GM12878 (cell line): ENCODE measurements at regions of chr17 and their contacts with region 1.

Region 1: GRCh38 chr17:74961657-74962490 is 10.7 kb downstream of the HID1 start:
- DNase-seq: no peak
- ATAC-seq: peak; percentile 86
- H3K4me3 ChIP-seq: no peak overlapping the region
- H3K27ac ChIP-seq: no peak overlapping the region
- H3K4me1 ChIP-seq: no peaks in the 10 kb centered on the region; the same call in 1 of the 2 replicates
- H3K27me3 ChIP-seq: no peaks in the 10 kb centered on the region
- CTCF ChIP-seq: peak; percentile 62 to 83 (median 72)
- EP300 ChIP-seq: no peak
- POLR2A ChIP-seq: no peak
- RAD21 ChIP-seq: peak; percentile 75

Region 2: GRCh38 chr17:74917430-74917829 is 44.4 kb before region 1 on chr17:
- CTCF ChIA-PET with region 1: interaction called, 274 read pairs
- POLR2A ChIA-PET with region 1: no interaction called
- RAD21 ChIA-PET with region 1: interaction called, 73 read pairs
- SMC1A ChIA-PET with region 1: interaction called, 73 read pairs
- in situ Hi-C with region 1: loop called (anchors 5 kb)
- intact Hi-C with region 1: no loop called
- DNase-seq: no peak
- ATAC-seq: no peak
- H3K4me3 ChIP-seq: no peak overlapping the region
- H3K27ac ChIP-seq: no peak overlapping the region
- H3K4me1 ChIP-seq: no peaks in the 10 kb centered on the region
- H3K27me3 ChIP-seq: peaks cover 0 to 3% of the 10 kb centered on the region in 2 experiments; a peak in 2 of 4 replicates
- CTCF ChIP-seq: no peak
- EP300 ChIP-seq: no peak
- POLR2A ChIP-seq: no peak
- RAD21 ChIP-seq: no peak

Region 3: DNA sequence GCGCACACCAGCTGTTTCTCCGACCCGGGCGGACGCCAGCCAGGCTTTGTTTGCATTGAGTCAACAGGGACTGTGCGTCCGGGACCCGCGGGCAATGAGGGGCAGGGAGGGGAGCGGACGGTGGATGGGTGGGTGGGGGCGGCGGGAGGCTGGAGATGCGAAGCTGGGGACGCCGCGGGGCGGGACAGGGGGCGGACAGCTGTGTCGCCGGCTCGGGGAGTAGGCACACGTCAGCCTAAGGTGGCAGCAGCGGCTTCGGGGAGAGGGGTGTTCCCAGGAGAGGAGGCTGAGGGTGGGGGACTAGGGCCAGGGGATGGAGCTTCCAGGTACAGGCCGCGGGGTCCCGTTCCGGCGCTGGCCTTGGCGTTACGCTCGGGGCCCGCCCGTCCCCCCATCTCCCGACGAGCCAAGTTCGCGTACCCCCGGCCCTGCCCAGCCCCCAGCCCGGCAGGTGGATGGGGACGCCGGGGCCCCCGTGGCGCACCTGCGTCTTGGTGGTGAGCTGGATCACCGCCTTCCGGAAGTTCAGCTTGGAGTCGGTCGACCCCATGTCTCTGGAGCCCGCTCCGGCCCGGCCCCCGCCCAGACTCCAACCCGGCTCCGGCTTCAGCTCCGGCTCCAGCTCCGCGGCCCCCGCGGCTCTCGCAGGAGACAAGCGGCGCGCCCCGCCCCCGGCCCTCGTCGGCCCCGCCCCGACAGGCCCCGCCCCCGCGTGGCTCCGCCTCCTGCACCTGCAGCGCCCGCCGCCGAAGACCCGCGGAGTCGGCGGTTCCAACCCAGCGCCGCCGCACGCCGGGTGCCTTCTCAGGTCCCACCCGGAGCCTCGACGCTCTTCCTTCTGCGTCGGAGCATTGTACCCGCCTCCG is 10.5 kb after region 1 on chr17 and contains the start of gene HID1:
- CTCF ChIA-PET with region 1: interaction called, 92 read pairs
- POLR2A ChIA-PET with region 1: no interaction called
- RAD21 ChIA-PET with region 1: interaction called, 7 read pairs
- SMC1A ChIA-PET with region 1: interaction called, 6 read pairs
- in situ Hi-C with region 1: no loop called
- intact Hi-C with region 1: no loop called
- DNase-seq: no peak
- ATAC-seq: peak; percentile 90
- H3K4me3 ChIP-seq: 0 out of 2 replicates have a peak within 1 kb of the TSS, but pooled peaks have one; percentile 55
- H3K27ac ChIP-seq: no peak within 1 kb of the TSS
- H3K4me1 ChIP-seq: no peaks in the 10 kb centered on the region
- H3K27me3 ChIP-seq: peaks cover 7 to 11% of the 10 kb centered on the region in 2 experiments; a peak in 3 of 4 replicates
- CTCF ChIP-seq: no peak
- EP300 ChIP-seq: no peak
- POLR2A ChIP-seq: no peak; the same call in 1 of the 2 replicates
- RAD21 ChIP-seq: no peak
- polyA plus RNA-seq, gene HID1: not detected

Region 4: DNA sequence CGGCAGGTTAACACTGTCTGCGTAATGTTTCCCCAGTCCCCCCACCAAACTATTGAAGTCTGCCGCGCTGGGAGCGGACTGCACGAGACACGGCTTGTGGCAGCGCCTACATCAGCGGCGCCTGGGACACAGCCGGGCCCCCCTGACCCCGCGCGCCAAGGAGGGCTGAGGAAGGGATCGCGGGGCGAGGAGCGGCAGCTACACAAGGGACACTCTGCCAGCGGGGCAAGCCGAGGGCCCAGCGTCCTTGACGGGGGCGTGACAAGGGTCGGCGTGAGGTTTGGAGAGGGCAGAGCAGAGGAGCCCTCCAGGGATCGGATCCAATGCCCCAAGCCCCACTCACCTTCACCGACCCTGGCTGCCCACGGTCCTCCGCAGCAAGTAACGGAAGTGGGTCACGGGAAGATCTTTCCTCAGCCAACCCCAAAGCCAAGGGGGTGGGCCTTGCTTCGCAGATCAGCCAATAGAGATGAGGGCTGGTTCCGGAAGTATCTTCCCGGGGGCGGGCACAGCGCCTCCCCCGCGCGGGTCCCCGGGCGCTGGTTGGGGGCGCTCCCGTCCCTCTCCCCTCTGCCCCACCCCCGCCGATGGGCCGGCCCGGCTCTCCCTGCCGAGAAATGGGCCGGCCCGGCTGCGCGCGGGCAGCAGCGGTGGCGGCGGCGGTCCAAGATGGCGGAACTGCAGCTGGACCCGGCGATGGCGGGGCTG is 84.9 kb after region 1 on chr17 and contains the starts of genes ATP5PD and KCTD2:
- CTCF ChIA-PET with region 1: interaction called, 16 read pairs
- POLR2A ChIA-PET with region 1: no interaction called
- RAD21 ChIA-PET with region 1: interaction called, 22 read pairs
- SMC1A ChIA-PET with region 1: interaction called, 11 read pairs
- in situ Hi-C with region 1: no loop called
- intact Hi-C with region 1: no loop called
- DNase-seq: peak; percentile 86
- ATAC-seq: peak; percentile 98
- H3K4me3 ChIP-seq: peak within 1 kb of the TSS; percentile 97
- H3K27ac ChIP-seq: peak within 1 kb of the TSS; percentile 71
- H3K4me1 ChIP-seq: peaks cover 3% of the 10 kb centered on the region
- H3K27me3 ChIP-seq: no peaks in the 10 kb centered on the region
- CTCF ChIP-seq: 0 out of 6 replicates have a peak, but pooled peaks of 1 of the 3 experiments have one; percentile 6
- EP300 ChIP-seq: no peak
- POLR2A ChIP-seq: peak; percentile 96
- RAD21 ChIP-seq: no peak
- polyA plus RNA-seq, gene ATP5PD: 710 to 772 TPM
- polyA plus RNA-seq, gene KCTD2: 1.5 to 2.2 TPM

Region 5: DNA sequence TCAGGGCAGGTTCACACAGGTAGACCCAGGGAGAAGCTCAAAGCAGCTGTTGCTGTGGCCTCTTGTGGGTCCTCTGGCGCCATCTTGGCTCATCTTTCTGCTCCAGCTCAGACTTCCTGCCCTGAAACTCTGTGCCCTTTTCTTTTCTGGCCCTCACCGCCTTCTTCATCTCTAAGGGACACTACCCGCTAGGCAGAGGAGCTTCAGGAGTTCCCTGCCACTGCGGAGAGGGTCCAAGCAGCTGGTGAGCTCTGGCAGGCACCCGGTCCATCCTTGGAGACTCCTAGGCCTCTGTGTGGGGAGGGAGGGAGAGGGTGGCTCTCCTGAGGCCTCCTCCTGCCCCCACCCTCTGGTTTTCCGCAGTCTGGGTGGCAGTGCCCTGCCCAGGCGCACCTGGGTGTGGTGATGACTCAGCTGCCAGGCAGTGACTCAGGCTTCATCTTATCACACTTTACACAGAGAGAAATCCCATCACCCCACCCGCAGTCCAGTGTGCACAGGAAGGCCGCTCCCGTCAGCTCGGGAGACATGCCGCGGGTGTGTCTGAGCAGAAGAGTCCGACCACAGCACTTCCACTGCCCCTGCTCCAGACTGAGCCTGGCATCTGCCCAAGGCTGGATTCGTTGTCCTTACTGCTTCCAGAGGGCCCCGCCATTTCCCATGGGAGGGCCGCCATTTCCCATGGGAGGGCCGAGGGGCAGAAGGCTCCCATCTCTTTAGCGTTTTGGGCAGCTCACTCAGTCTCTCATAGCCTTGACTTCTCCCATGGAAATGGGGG is 162.4 kb after region 1 on chr17:
- CTCF ChIA-PET with region 1: interaction called, 6 read pairs
- POLR2A ChIA-PET with region 1: no interaction called
- RAD21 ChIA-PET with region 1: interaction called, 8 read pairs
- SMC1A ChIA-PET with region 1: no interaction called
- in situ Hi-C with region 1: no loop called
- intact Hi-C with region 1: loop called (anchors 5 kb)
- DNase-seq: no peak
- ATAC-seq: no peak
- H3K4me3 ChIP-seq: no peak overlapping the region
- H3K27ac ChIP-seq: no peak overlapping the region
- H3K4me1 ChIP-seq: peaks cover 10% of the 10 kb centered on the region
- H3K27me3 ChIP-seq: no peaks in the 10 kb centered on the region
- CTCF ChIP-seq: no peak
- EP300 ChIP-seq: no peak
- POLR2A ChIP-seq: no peak
- RAD21 ChIP-seq: no peak

Region 6: DNA sequence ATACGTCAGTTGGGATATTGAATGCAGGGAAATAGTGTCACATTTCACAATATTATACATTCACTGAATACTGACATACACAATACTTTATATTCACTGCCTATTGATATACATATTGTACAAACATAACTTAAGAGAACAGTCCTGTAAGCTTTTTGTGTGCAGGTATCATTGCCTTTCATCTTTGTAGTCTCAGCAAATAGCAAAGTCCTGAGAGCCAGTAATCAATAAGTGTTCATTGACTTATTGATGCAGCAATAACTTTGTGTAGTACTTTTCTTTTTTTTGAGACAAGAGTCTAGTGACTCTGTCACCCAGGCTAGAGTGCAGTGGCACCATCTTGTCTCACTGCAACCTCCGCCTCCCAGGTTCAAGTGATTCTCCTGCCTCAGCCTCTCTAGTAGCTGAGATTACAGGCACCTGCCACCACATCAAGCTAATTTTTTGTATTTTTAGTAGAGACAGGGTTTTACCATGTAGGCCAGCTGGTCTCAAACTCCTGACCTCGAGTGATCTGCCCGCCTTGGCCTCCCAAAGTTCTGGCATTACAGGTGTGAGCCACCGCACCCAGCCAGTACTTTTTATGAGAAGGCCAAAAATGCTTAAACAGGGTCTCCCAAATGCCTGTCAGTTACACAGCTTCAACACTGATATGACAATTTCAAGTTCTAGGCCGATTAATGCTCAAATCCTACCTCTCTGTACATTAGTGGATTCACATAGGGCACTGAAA is 238.2 kb after region 1 on chr17:
- CTCF ChIA-PET with region 1: interaction called, 224 read pairs
- POLR2A ChIA-PET with region 1: interaction called, 7 read pairs
- RAD21 ChIA-PET with region 1: interaction called, 127 read pairs
- SMC1A ChIA-PET with region 1: interaction called, 74 read pairs
- in situ Hi-C with region 1: loop called (anchors 5 kb)
- intact Hi-C with region 1: loop called (anchors 1 kb)
- DNase-seq: no peak
- ATAC-seq: no peak
- H3K4me3 ChIP-seq: no peak overlapping the region
- H3K27ac ChIP-seq: no peak overlapping the region
- H3K4me1 ChIP-seq: no peaks in the 10 kb centered on the region; the same call in 1 of the 2 replicates
- H3K27me3 ChIP-seq: no peaks in the 10 kb centered on the region
- CTCF ChIP-seq: no peak
- EP300 ChIP-seq: no peak
- POLR2A ChIP-seq: no peak
- RAD21 ChIP-seq: no peak

Region 7: DNA sequence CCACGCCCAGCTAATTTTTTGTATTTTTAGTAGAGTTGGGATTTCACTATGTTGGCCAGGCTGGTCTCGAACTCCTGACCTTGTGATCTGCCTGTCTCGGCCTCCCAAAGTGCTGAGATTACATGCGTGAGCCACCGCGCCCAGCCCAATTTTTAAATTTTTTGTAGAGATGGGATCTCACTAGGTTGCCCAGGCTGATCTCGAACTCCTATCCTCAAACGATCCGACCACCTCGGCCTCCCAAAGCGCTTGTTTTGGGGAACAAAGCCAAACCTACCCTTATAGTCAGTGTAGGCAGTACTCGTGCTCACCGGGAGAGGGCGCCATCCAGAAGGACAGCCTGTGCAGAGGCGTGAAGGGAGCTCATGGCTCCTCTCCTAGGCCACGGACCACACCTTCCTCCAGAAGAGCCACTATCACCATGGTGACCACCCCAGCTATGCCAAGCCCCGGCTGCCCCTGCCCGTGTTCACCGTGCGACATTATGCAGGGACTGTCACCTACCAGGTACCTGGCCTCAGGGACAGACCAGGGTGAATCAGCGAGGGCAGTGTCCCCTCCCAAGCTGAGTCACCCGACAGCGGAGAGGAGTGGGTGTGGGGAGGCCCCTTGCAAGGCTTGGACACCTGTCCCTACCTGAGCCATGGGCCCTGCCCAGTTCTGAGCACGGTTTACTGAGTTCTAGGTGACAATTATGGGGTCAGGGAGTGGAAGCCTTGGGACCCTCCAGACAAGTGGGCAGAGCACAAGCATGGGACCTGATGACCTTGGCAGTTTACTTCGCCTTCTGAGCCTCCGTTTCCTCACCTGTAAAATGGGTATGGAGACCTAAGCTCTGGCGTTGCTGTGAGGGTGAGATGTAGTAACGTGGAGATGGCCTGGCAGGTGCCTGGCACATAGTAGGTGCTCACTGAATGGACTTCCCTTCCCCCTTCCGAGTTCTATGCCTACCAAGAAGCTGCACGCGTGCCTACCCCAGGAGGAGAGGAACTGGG is 639.5 kb after region 1 on chr17:
- CTCF ChIA-PET with region 1: no interaction called
- POLR2A ChIA-PET with region 1: no interaction called
- RAD21 ChIA-PET with region 1: no interaction called
- SMC1A ChIA-PET with region 1: no interaction called
- in situ Hi-C with region 1: no loop called
- intact Hi-C with region 1: no loop called
- DNase-seq: no peak
- ATAC-seq: peak; percentile 94
- H3K4me3 ChIP-seq: no peak overlapping the region
- H3K27ac ChIP-seq: no peak overlapping the region
- H3K4me1 ChIP-seq: no peaks in the 10 kb centered on the region
- H3K27me3 ChIP-seq: no peaks in the 10 kb centered on the region
- CTCF ChIP-seq: peak; percentile 74 to 91 (median 79)
- EP300 ChIP-seq: no peak
- POLR2A ChIP-seq: no peak
- RAD21 ChIP-seq: peak; percentile 45